PC-3 (cell line): ENCODE measurements at regions of chr1 and their contacts with region 1.

Region 1: DNA sequence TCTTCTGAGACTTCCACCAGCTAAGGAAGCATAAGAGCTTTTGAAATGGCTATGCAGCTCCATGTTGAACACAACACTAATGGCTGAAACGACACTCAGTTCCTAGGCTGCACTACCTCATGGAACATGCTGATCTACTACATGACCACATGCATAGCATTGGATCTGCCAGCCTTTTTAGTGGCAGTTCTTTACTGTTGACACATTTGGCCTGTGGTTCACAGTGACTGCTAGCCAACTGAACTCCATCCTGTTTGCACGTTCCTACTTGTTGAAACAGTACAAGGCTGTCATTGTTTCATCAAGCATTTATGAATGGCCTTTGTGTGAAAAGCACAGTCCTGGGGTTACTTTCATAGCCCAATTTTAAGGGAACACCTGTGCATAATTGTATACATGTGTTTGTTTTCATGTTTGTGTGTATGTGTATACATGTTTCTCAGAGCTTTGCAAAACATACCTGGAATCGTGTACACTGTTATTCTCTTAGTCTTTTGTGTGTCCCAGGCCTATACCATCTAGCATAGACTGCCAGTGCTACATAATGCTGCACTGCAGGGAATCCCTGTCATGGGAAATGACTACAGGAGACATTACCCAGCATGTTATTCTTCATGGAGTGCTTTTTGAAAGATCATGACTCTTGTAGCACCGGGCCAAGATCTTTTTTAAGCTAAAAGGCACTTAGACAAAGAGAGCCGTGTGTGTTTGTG is 179.6 kb upstream of the ESRRG start:
- DNase-seq: peak; percentile 84
- ATAC-seq: peak; percentile 82
- H3K4me3 ChIP-seq: no peak overlapping the region
- H3K27ac ChIP-seq: peak overlapping the region; percentile 41
- H3K4me1 ChIP-seq: peaks cover 19% of the 10 kb centered on the region
- H3K27me3 ChIP-seq: no peaks in the 10 kb centered on the region
- CTCF ChIP-seq: no peak

Region 2: DNA sequence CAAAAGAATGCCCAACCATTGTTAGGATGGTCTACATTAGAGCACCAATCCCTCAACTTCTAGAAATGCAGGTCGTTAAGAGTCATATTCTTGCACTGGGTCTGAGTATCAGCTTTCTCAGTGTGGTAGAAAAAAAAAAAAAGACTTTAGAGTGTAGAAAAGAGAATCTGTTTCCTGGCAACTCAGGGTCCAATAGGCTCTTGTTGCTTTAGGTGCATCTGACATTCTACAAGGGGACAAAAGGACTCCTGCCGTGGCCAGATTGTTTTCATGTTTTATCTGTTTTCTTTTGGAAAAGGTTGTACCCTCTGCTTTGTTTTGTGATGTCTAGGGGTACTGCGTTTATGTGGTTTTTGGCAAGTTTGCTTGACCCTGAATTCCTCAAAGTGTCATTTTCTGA is 1925.7 kb before region 1 on chr1:
- CTCF ChIA-PET with region 1: no interaction called
- POLR2A ChIA-PET with region 1: no interaction called
- intact Hi-C with region 1: loop called (anchors 10 kb)
- DNase-seq: no peak
- ATAC-seq: no peak
- H3K4me3 ChIP-seq: no peak overlapping the region
- H3K27ac ChIP-seq: no peak overlapping the region
- H3K4me1 ChIP-seq: no peaks in the 10 kb centered on the region
- H3K27me3 ChIP-seq: no peaks in the 10 kb centered on the region
- CTCF ChIP-seq: no peak

Region 3: DNA sequence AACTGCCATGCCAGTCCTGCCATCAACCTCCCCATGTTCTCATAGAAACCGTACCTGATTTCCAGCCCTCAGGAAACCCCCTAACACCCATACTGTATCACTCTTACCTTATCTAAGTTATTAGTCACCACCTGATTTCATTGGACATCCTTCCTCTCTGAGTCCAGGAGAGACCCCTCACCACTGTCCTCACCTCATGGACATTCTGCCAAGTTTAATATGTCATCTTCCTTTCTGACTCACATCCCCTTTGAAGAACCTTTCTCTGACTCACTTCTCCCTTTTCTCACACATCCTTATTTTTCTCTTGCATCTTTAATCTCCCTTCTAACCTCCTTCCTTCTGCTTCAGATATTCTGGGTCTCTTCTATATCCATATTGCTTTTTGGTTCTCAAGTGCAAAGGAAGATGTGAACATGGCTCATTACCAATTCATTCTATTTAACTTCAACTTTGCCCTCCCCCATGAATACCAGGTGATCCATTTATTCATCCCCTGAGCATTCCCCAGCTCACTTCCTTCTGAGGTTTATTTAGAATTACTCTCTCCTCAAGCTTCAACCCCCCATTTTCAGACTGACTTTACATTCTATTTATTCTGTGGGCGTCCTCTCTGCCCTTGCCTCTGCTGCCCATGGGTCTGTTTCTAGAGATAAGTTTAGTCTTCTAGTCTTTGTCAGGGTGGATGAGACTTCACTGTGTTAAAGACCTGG is 27.2 kb after region 1 on chr1:
- CTCF ChIA-PET with region 1: no interaction called
- POLR2A ChIA-PET with region 1: no interaction called
- intact Hi-C with region 1: loop called (anchors 2 kb)
- DNase-seq: peak; percentile 95
- ATAC-seq: peak; percentile 86
- H3K4me3 ChIP-seq: no peak overlapping the region
- H3K27ac ChIP-seq: peak overlapping the region; percentile 72
- H3K4me1 ChIP-seq: peaks cover 24% of the 10 kb centered on the region
- H3K27me3 ChIP-seq: no peaks in the 10 kb centered on the region
- CTCF ChIP-seq: no peak